Calu3 (cell line): ENCODE measurements at regions of chr9 and their contacts with region 1.

Region 1: DNA sequence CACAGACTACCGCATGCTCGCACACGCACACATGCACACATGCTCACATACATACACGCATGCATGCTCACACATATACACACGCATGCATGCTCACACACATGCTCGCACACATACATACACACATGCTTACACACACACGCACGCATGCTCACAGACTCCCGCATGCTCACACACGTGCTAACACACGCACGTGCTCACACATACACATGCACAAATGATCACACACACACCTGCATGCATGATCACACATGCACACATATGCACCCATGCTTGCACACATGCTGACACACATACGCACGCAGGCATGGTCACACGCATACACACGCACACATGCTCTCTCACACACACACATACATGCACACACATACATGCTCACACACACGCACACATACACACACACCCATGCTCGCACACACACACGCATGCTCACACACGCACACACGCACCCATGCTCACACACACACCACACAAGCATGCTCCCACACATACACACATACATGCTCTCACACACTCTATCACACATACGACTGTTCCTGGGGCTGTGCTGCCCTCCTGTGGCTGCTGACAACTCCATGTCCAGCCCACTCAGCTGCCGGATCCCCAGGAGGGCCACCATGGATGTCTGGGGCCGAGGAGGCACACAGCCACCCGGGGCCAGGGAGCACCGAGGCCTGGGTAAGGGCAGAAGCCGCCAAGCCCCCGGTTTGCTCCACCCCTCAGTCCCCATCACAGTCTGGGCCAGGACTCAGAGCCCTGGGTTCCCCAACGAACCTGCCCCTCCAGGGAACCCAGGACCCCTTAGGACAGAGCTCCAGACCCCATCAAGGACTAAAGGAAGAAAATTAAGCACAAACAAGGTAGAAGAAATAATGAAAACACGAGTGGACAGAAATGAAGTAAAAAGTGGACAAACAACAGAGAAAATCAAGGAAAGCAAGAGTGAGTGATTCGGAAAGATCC is 31.4 kb upstream of the EGFL7 start:
- DNase-seq: peak; percentile 73
- H3K4me3 Mint-ChIP-seq: no peak overlapping the region
- H3K27ac Mint-ChIP-seq: no peak overlapping the region
- H3K4me1 Mint-ChIP-seq: no peaks in the 10 kb centered on the region
- H3K27me3 Mint-ChIP-seq: peaks cover 12% of the 10 kb centered on the region
- CTCF ChIP-seq: peak; percentile 72

Region 2: GRCh38 chr9:136482793-136483588 is 148.3 kb before region 1 on chr9 and contains the start of gene SEC16A:
- CTCF ChIA-PET with region 1: interaction called, 20 read pairs
- intact Hi-C with region 1: loop called (anchors 1 kb)
- DNase-seq: peak; percentile 98
- H3K4me3 Mint-ChIP-seq: peak within 1 kb of the TSS; percentile 93
- H3K27ac Mint-ChIP-seq: peak within 1 kb of the TSS; percentile 97
- H3K4me1 Mint-ChIP-seq: no peaks in the 10 kb centered on the region
- H3K27me3 Mint-ChIP-seq: peaks cover 5% of the 10 kb centered on the region
- CTCF ChIP-seq: no peak
- total RNA-seq, gene SEC16A: 48.9 and 49.6 TPM in 2 replicates

Region 3: DNA sequence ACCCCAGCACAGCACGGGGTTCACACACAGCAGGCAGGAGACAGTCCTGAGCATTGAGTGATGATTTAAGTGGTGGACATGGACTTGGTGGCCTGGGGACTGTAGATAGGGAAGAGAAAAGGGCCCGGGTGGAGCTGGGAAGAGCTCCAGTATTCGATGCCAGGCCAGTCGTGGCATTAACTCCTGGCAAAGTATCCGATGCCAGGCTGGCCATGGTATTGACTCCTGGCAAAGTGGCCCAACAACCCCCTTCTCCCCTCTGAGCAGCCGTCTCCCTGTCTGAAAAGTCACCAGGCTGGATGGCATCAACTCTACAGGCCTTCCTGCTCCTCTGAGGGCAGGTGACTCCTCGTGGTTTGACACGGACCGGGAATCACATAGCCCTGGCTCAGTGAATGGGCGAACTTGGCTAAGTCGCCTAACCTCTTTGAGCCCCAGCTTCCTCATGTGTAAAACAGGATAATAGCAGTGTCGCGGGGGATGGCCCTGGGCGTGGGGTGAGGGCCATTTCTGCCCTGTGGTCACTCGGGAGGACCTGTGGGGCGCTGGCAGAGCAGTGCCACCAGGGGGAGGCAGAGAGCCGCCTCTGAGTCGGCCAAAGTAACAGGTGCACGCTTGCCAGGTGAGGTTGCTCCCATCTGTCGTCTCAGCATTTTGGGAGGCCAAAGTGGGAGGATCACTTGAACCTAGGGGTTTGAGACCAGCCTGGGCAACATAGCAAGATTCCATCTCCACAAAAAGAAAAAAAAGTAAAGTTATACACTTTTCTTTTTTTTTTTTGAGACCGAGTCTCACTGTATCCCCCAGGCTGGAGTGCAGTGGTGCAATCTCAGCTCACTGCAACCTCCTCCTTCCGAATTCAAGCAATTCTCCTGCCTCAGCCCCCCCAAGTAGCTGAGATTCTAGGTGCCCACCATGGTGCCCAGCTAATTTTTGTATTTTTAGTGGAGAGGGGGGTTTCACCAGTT is 142.8 kb before region 1 on chr9:
- CTCF ChIA-PET with region 1: interaction called, 20 read pairs
- intact Hi-C with region 1: loop called (anchors 1 kb)
- DNase-seq: peak; percentile 83
- H3K4me3 Mint-ChIP-seq: no peak overlapping the region
- H3K27ac Mint-ChIP-seq: no peak overlapping the region
- H3K4me1 Mint-ChIP-seq: no peaks in the 10 kb centered on the region
- H3K27me3 Mint-ChIP-seq: peaks cover 9% of the 10 kb centered on the region
- CTCF ChIP-seq: peak; percentile 89

Region 4: DNA sequence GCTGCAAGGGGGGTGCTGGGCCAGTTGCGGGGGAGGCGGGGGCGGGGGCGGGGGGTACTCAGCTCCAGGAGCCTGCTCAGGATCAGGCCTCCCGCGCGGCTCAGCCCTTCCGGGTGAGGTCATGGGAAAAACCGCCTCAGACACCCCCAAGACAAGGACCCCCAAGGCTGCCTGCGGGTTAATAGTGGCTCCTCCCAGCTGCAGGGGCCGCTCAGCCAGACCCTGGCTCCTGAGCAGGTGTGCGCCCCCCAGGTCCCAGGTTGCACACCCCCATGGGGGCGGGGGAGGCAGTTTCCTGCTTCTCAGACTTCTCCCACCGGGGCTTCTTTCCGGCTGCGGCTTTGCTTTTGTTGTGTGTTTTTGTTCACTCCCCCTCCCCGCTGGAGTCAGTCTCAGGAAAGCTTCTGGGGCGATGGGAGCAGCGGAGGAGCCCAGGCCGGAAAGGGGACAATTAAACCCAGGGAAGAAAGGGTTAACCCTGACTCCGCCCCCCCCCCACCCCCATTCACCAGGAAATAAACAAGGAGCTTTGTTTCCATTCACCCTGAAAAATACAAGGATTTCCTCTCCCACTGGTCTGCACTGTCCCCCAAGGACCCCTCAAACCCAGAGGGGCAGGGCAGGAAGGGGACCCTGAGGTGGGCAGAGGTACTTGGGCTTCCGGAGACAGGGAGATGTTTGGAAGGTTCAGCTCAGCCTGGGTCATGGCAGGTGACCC is 43.2 kb before region 1 on chr9:
- CTCF ChIA-PET with region 1: no interaction called
- intact Hi-C with region 1: no loop called
- DNase-seq: no peak
- H3K4me3 Mint-ChIP-seq: no peak overlapping the region
- H3K27ac Mint-ChIP-seq: no peak overlapping the region
- H3K4me1 Mint-ChIP-seq: no peaks in the 10 kb centered on the region
- H3K27me3 Mint-ChIP-seq: peaks cover 36% of the 10 kb centered on the region
- CTCF ChIP-seq: no peak

Region 5: GRCh38 chr9:137772281-137772873 is 1141.1 kb after region 1 on chr9:
- CTCF ChIA-PET with region 1: no interaction called
- intact Hi-C with region 1: no loop called
- DNase-seq: no peak
- H3K4me3 Mint-ChIP-seq: no peak overlapping the region
- H3K27ac Mint-ChIP-seq: no peak overlapping the region
- H3K4me1 Mint-ChIP-seq: no peaks in the 10 kb centered on the region
- H3K27me3 Mint-ChIP-seq: no peaks in the 10 kb centered on the region
- CTCF ChIP-seq: no peak